Mammary epithelial cell (primary cell): ENCODE measurements at regions of chr2 and their contacts with region 1.

Region 1: GRCh38 chr2:29443627-29444026 is 328.4 kb downstream of the CLIP4 start:
- DNase-seq: peak; percentile 62
- H3K4me3 ChIP-seq: no peak overlapping the region
- H3K27ac ChIP-seq: no peak overlapping the region
- H3K4me1 ChIP-seq: peaks cover 10% of the 10 kb centered on the region
- H3K27me3 ChIP-seq: no peaks in the 10 kb centered on the region
- CTCF ChIP-seq: no peak

Region 2: GRCh38 chr2:29469961-29470360 is 26.3 kb after region 1 on chr2:
- CTCF ChIA-PET with region 1: no interaction called
- dilution Hi-C with region 1: loop called (anchors 5 kb)
- in situ Hi-C with region 1: no loop called
- intact Hi-C with region 1: no loop called
- DNase-seq: no peak
- H3K4me3 ChIP-seq: no peak overlapping the region
- H3K27ac ChIP-seq: no peak overlapping the region
- H3K4me1 ChIP-seq: no peaks in the 10 kb centered on the region
- H3K27me3 ChIP-seq: no peaks in the 10 kb centered on the region
- CTCF ChIP-seq: no peak

Region 3: GRCh38 chr2:29495536-29496060 is 52.0 kb after region 1 on chr2:
- CTCF ChIA-PET with region 1: no interaction called
- dilution Hi-C with region 1: no loop called
- in situ Hi-C with region 1: no loop called
- intact Hi-C with region 1: no loop called
- DNase-seq: no peak
- H3K4me3 ChIP-seq: no peak overlapping the region
- H3K27ac ChIP-seq: no peak overlapping the region
- H3K4me1 ChIP-seq: no peaks in the 10 kb centered on the region
- H3K27me3 ChIP-seq: no peaks in the 10 kb centered on the region
- CTCF ChIP-seq: no peak